Activated CD4-positive, alpha-beta memory T cell treated with anti-CD3 and anti-CD28 coated beads, Interleukin-2, amount 10 ng/mL, durations not matched to agents 7 days and 5 days (primary cell): ENCODE measurements at regions of chr4 and their contacts with region 1.

Region 1: DNA sequence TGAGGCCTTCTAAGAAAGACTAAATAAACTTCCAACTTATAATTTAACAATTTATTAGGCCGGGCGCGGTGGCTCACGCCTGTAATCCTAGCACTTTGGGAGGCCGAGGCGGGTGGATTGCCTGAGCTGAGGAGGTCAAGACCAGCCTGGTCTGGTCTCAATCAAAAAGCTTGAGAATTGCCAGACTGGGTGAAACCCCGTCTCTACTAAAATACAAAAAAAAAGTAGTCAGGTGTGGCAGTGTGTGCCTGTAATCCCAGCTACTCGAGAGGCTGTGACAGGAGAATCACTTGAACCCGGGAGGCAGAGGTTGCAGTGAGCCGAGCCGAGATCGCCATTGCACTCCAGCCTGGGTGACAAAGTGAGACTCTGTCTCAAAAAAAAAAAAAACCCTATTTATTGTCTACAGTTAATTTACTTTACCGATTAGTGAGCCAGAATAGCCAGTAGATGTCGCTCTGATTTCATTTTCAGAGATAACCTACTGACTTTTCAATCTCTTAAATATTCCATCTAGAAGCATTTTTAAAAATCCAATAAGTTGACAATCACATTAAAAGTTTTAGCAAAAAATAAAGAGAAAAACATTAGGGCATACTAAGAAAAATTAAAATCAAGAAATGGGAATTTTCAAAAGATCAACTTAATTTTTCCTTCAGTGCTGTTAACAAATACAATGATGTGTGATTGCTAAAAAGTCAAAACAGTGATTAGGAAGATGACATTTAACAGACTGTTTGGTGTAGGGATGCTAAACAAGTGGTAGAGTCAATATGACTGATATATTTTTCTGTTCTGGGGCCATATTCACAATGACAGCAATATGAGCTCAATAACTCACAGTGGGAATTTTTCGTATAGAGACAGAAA is 4.3 kb upstream of the SHROOM3 start:
- DNase-seq: no peak
- H3K4me3 Mint-ChIP-seq: no peak overlapping the region
- H3K27ac Mint-ChIP-seq: no peak overlapping the region
- H3K4me1 Mint-ChIP-seq: peaks cover 1% of the 10 kb centered on the region
- H3K27me3 Mint-ChIP-seq: peaks cover 23% of the 10 kb centered on the region

Region 2: GRCh38 chr4:76504613-76505465 is 74.1 kb after region 1 on chr4:
- CTCF ChIA-PET with region 1: interaction called, 12 read pairs
- POLR2A ChIA-PET with region 1: no interaction called
- DNase-seq: no peak
- H3K4me3 Mint-ChIP-seq: no peak overlapping the region
- H3K27ac Mint-ChIP-seq: no peak overlapping the region
- H3K4me1 Mint-ChIP-seq: no peaks in the 10 kb centered on the region
- H3K27me3 Mint-ChIP-seq: peaks cover 14% of the 10 kb centered on the region